Posterior vena cava (tissue), 2 donors: ENCODE measurements at regions of chr15 and their contacts with region 1.

Region 1: DNA sequence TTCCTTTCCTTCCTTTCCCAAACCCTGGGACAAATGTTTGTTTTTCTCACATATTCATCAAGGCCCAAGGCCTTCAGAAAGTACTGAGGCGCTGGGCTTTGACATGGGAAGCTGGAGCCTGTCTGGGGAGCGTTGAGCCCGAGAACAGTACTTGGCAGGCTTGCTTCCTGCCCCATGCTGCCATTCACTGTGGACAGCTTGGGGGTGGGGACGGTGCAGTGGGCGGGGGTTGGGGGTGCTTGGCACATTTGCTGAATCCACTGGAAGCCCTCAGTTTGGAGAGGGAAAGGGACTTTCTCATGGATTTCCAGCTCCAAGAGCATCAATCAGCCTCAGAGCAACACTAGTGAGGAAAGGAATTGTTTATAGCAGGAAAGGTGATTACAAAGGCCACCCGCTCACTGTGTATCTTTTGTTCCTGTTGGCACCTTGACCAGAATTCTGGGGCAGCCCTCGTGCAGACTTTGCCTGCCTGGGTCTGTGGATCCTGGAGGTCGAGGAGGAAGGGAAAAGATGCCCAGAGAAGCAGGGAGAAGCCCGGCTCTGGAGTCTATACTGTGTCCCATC is 199.8 kb upstream of the RGMA start:
- DNase-seq: no peak

Region 2: DNA sequence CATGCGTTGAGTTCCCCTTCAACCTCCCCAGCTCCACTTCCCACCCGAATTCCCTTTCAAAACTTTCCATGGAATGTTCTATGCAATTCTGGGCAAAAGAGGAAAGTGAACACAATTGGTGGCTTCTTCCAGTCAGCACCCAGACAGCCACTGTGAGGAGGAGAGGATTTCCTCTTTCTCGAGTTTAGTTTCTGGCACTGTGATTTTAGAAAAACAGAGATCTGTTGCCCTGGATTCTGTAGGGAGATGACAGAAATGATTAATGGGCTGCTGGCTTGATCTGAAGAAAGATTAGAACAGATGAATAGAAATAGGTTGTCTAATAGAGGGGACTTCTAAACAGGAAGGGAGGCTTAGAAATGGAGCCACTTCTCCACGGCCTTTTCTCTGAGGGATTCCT is 1114.5 kb after region 1 on chr15:
- intact Hi-C with region 1: loop called in 1 of 2 experiments (anchors 10 kb)
- DNase-seq: no peak